Activated naive CD4-positive, alpha-beta T cell treated with anti-CD3 and anti-CD28 coated beads, Interleukin-2, amount 10 ng/mL, durations not matched to agents 7 days and 5 days (primary cell): ENCODE measurements at regions of chr2 and their contacts with region 1.

Region 1: DNA sequence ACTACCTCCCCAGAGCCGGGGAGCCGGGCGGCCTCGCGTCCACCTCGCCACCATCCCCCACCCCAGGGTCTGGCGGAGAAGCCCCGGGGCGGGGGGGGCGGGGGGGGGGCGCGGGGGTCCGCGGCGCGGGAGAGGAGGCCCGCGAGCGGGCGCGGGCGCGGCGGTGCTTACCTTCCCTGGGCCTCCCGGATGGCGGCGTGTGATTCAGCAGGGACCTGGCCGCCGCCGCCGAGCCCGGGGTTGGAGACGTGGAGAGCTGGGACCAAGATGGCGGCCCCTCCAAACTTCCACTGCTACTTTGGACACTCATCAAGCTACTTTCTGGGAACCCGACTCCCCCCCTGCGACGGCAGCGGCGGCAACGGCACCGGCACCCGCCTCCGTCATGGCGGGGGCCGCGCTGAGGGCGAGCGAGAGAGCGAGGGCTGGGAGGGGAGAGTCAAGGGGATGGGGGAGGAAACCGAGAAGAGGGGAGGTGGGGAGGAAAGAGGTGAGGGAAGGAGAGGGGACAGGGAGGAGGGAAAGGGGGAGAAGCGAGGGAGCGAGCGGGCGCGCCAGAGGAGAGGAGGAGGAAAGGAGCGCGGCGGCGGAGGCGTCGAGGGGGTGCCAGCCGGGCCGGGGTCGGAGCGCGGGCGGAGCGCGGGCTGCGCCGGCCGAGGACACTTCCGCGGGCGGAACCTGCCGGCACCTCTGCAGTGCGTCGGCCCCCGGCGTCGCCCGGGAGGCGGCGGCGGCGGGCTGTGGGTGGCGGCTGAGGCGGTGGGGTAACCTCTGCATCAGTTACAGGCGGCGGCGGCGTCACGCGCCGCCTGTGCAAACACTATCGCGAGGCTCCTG is at the start of gene TLK1:
- DNase-seq: peak; percentile 85
- H3K4me3 Mint-ChIP-seq: peak within 1 kb of the TSS; percentile 99
- H3K27ac Mint-ChIP-seq: peak within 1 kb of the TSS; percentile 98
- H3K4me1 Mint-ChIP-seq: peaks cover 66% of the 10 kb centered on the region
- H3K27me3 Mint-ChIP-seq: no peaks in the 10 kb centered on the region

Region 2: DNA sequence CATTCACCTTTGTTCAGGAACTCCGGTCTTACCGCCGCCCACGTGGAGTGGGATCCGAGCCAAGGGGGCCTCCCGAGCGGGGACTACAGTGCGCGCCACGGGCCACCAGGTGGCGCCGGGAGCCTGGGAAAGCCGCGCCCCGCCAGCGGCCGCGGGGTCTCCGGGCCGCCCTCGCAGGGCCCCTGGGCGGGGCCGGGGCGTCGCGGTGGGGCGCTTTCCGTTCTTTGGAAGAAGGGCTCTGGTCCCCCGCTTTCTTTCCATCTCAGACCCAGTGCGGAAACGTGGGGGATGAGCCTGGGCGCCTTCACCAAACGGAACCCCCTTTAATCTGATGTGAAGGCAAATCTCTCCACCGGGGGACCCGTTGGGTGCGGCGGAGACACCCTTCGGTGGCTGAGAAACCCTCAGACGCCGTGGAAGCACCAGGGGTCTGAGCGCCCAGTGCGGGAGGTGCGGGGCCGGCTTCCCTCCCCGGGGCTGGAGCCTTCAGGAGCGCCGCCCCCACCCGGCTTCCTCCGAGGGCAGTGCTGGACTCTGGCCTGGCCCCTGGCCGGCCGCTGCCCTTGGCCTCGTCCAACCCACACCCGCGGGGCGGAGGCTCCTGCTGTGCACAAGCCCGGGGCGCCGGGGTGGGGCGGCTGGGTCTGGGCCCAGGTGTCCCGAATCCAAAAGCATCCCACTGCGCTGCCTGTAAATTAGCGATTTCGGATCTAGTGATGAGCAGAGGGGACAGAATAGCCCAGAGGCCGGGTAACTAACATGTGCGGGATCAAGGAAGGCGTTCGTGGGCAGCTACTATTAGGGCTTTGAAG is 186.6 kb before region 1 on chr2:
- CTCF ChIA-PET with region 1: interaction called, 37 read pairs
- DNase-seq: peak; percentile 83
- H3K4me3 Mint-ChIP-seq: peak overlapping the region; percentile 74
- H3K27ac Mint-ChIP-seq: peak overlapping the region; percentile 2
- H3K4me1 Mint-ChIP-seq: peaks cover 15% of the 10 kb centered on the region
- H3K27me3 Mint-ChIP-seq: peaks cover 6% of the 10 kb centered on the region

Region 3: DNA sequence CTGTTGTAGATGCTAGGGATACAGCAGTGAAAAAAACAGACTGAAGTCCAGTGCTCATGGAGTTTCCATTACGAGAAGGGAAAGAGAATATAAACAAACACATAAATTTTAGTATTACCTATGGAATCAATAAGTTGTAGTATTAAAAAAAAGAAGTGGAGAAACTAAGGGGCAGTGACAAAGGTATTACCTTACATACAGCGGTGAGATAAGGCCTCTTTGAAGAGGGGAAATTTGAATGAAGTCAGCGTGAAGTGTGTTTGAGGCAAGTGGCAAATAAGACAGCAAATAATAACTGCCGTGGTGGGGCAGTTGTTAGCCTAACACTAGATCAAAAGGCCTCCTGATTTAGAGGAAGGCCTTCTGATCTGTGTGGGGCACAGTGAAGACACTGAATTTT is 57.5 kb before region 1 on chr2:
- CTCF ChIA-PET with region 1: no interaction called
- DNase-seq: no peak
- H3K4me3 Mint-ChIP-seq: no peak overlapping the region
- H3K27ac Mint-ChIP-seq: no peak overlapping the region
- H3K4me1 Mint-ChIP-seq: peaks cover 15% of the 10 kb centered on the region
- H3K27me3 Mint-ChIP-seq: no peaks in the 10 kb centered on the region